PC-3 (cell line): ENCODE measurements at regions of chr11 and their contacts with region 1.

Region 1: DNA sequence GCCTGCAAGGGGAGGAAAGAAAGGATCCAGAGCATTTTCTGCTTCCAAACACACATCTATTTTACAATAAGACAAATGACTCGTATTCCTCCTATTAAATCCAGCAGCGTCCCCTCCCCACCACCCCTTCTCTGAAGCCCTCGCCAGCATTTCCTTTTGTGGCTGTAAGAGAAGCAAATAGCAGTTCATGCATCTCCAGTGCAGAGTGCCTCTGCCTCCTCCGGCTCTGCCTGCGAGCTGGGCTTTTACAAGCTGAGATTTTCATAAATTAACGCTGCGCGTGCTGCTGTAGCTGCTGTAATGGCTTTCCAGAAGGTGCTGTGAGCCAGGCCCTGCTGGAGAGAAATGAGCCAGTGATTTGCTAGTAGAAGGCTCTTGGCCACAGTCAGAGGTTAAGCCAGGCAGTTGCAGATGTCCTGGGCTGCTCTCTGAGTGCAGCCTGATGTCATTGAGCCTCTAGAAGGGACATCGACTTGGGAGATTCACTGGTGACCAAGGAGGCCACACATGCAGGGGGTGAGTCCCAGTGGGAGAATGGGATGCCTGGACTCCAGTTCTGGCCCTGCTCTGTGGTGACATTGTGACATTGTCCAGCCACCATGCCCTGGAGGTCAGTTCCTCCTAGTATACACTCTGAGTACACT is 134.5 kb upstream of the NAV2 start:
- DNase-seq: peak; percentile 62
- ATAC-seq: peak; percentile 95
- H3K4me3 ChIP-seq: 0 out of 2 replicates have a peak overlapping the region, but pooled peaks have one; percentile 7
- H3K27ac ChIP-seq: peak overlapping the region; percentile 61
- H3K4me1 ChIP-seq: peaks cover 33% of the 10 kb centered on the region
- H3K27me3 ChIP-seq: no peaks in the 10 kb centered on the region
- CTCF ChIP-seq: no peak

Region 2: GRCh38 chr11:19660076-19660475 is 82.0 kb after region 1 on chr11:
- CTCF ChIA-PET with region 1: no interaction called
- POLR2A ChIA-PET with region 1: no interaction called
- intact Hi-C with region 1: loop called (anchors 5 kb)
- DNase-seq: peak; percentile 97
- ATAC-seq: peak; percentile 97
- H3K4me3 ChIP-seq: no peak overlapping the region
- H3K27ac ChIP-seq: peak overlapping the region; percentile 51
- H3K4me1 ChIP-seq: peaks cover 25% of the 10 kb centered on the region
- H3K27me3 ChIP-seq: no peaks in the 10 kb centered on the region
- CTCF ChIP-seq: no peak

Region 3: DNA sequence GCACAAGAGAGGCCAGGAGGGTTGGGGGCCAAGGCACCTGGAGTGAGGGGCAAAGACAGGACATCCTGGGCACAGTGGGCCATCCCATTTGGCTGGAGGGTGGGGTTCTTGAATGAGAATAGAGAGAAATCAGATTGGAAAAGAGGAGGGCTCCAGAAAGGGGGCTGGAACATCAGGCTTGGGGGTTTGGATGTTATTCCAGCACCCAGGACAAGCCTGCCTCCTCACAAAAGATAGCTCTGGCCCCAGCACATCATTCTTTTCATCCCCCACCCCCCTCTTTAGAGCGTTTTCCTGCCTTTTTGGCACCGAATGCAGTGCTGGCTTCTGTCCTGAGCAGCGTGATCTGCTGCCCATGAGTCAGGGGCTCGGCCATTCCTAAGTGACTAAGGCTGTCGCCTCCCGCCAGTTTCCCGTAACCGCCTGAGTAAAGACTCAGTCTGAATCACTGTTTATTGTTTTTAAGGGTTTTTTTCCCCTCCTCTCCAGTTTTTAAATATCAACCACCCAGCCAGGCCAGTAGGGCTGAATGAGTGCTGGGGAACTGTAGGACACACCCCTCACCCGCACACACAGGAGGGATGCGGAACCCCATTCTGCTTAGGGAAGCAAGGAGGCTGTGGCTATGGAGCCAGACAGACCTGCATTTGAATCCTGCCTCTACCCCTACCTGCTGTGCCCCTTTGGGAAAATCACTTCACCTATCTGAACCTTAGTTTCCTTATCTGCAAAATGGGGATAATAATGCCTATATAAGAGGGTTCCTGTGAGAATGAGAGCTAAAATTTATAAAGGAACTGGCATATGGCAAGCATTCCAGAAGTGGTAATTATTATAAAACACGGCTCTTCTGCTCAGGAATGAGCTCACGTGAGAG is 102.1 kb after region 1 on chr11:
- CTCF ChIA-PET with region 1: no interaction called
- POLR2A ChIA-PET with region 1: no interaction called
- intact Hi-C with region 1: loop called (anchors 1 kb)
- DNase-seq: peak; percentile 97
- ATAC-seq: peak; percentile 93
- H3K4me3 ChIP-seq: peak overlapping the region; percentile 20; the same call in 1 of the 2 replicates
- H3K27ac ChIP-seq: peak overlapping the region; percentile 66
- H3K4me1 ChIP-seq: peaks cover 29% of the 10 kb centered on the region
- H3K27me3 ChIP-seq: no peaks in the 10 kb centered on the region
- CTCF ChIP-seq: no peak